ENCODE measurements at regions of chr15 and their contacts with region 1.

Region 1: DNA sequence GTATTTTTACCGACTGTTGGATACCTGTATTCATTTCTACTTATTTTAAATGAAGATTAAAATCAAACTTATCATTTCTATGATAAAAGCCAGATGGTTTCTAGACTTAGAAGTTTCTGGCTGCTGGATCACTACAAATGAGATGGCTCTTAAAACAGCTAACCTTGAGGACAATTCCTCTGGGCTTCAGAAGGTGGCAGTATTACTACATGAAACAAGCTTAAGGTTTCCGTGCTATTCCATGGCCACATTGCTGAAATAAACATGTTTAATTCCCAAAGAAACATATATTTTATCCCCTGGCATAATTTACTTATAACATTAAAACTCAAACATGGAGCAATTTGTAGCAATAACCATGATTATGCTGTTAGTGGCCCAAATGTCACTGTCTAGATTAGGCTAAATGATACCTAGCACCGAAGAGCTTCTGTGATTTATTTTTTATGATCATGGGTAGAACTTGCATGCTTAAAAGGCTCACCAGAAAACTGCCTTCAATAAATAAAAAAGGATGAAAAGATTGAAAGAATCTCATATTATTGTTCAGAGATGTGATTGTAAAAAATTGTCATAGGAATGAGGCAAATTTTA is 204.0 kb upstream of the NANOGP8 start:
- DNase-seq: no peak
- ATAC-seq: peak in 1 of 2 donors; percentile 63

Region 2: DNA sequence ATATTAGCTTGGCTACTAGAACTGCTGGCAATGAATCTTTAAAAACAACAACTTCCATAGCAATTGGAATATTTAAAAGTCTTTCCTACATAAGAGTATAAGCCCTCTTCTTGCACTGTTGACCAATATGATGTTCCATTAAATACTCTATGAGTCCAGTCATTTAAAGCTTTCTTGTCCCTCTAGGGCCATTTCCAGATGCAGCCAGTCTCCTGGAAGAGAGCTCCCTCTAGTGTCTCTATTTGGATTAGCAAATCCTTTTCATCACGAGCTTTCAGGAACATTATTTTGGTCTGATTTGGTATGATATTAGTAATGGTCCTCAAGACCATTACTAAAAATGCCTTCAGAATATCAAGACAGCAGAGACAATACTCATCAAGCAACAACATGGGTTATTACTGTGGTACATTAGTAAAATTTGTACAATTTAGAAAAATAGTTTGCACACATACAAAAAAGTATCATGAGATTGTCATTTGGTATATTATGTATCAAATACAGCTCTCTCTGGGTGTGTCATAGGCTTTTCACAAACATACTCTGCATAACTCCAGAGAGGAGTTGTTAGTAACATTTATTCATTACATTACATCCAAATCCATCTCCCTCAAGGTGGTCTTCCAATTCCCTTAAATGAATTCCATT is 155.6 kb after region 1 on chr15:
- intact Hi-C with region 1: loop called (anchors 2 to 5 kb)
- DNase-seq: no peak
- ATAC-seq: no peak

Measured in left cardiac atrium (tissue), 4 donors.